ENCODE measurements at regions of chr2 and their contacts with region 1.

Region 1: DNA sequence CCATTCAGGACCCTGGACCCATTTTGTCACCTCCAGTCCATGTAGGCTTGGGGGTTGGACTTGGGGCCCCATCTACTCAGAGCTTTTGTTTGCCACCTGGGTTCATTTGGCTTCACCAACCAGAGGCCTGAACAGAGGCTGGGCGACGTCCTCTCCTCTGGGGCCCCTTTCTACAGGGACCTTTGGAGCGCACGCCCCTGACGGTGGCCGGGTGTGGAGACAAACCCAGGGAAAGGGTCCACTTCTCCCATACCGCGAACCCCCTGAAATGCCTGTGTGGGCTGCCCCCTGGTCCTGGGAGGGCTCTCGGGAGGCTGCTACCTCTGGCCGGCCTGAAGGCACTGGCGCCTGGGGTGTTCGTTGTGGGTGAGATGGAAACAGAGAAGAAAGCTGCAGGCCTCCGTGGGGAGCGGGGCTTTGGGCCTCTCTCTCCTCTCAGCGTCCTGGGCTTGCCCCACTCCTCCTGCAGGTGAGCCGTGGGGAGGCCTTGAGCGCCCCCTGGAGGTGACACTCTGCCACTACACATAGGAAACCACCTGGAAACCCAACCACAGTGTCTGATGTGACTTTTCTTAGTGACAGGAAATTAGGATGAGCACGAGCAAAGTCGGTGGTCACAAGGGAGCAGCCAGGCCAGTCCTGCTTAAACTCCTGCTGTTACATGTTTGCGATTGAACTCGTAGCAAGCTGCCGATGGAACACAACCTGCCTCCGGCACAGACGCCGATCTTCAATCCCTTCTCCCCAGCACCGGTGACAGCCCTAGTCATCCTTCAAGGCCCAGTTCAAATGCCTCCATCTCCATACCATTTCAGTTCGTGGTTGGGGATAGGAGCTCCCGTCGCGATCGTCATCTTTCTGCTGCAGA is 12.0 kb upstream of the NTSR2 start:
- DNase-seq: peak in 1 of 2 experiments; percentile 60
- H3K4me3 ChIP-seq: no peak overlapping the region
- H3K27ac ChIP-seq: no peak overlapping the region
- H3K4me1 ChIP-seq: peaks cover 19% of the 10 kb centered on the region
- H3K27me3 ChIP-seq: 0 out of 2 replicates have a peak, but pooled peaks cover 4% of the 10 kb centered on the region
- CTCF ChIP-seq: peak; percentile 99

Region 2: GRCh38 chr2:11477994-11478393 is 204.0 kb before region 1 on chr2:
- CTCF ChIA-PET with region 1: no interaction called
- POLR2A ChIA-PET with region 1: interaction called, 5 read pairs
- intact Hi-C with region 1: loop called (anchors 1 kb)
- DNase-seq: peak; percentile 53 to 72
- H3K4me3 ChIP-seq: no peak overlapping the region
- H3K27ac ChIP-seq: no peak overlapping the region
- H3K4me1 ChIP-seq: no peaks in the 10 kb centered on the region
- H3K27me3 ChIP-seq: no peaks in the 10 kb centered on the region
- CTCF ChIP-seq: peak; percentile 97

Measured in PC-9 (cell line).